Sigmoid colon (tissue), 7 donors: ENCODE measurements at regions of chr15 and their contacts with region 1.

Region 1: GRCh38 chr15:59688841-59689625 is at the start of gene BNIP2:
- DNase-seq: peak; percentile 100
- H3K4me3 ChIP-seq: peak within 1 kb of the TSS; percentile 94 to 98 (median 96)
- H3K27ac ChIP-seq: peak within 1 kb of the TSS; percentile 96 to 99 (median 98)
- H3K4me1 ChIP-seq: peaks cover 0 to 47% (median 31%) of the 10 kb centered on the region in 4 donors
- H3K27me3 ChIP-seq: no peaks in the 10 kb centered on the region
- CTCF ChIP-seq: no peak
- EP300 ChIP-seq: peak in 1 of 4 donors; percentile 43
- POLR2A ChIP-seq: peak; percentile 77 to 83
- total RNA-seq, gene BNIP2: 115 to 199 (median 142) TPM

Region 2: DNA sequence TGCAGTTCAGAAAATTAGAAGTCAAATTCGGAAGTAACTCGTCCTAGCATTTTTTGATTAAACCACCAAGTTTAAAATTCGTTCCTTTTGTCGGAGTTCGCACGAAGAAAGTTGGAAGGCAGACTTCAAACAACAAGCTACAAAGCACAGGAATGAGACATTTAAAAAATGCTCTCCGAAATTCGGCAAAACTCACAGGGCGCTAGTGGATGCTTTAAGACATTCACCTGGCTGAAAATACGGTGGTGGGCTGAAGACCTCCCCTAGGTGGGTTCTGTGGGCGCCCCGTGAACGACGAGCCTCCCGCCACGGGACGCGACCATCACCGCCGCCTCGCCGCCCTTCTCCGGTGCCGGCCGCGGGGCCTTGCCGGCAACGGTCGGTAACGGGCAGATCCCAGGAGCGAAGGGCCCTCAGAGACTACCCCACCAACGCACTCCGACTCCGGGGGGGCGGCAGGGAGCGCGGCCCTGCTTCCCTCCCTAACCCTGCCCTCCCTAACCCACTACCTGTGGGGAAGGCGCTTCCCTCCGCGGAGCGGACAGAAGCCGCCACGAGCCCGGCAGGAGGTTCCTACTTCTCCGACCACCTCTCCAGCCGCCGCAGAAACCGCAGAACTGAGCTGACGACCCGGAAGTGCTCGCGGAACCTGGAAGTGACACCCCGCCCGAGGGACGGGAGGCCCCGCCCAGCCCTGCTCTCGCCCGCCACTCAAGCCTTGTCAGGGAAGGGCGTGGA is 32.0 kb before region 1 on chr15 and contains the start of gene GTF2A2:
- intact Hi-C with region 1: loop called (anchors 1 kb)
- DNase-seq: peak; percentile 96
- H3K4me3 ChIP-seq: peak within 1 kb of the TSS; percentile 88 to 93 (median 91)
- H3K27ac ChIP-seq: peak within 1 kb of the TSS; percentile 85 to 88 (median 86)
- H3K4me1 ChIP-seq: peaks cover 0 to 31% (median 19%) of the 10 kb centered on the region in 4 donors
- H3K27me3 ChIP-seq: no peaks in the 10 kb centered on the region
- CTCF ChIP-seq: no peak
- EP300 ChIP-seq: no peak
- POLR2A ChIP-seq: peak; percentile 42 to 61
- total RNA-seq, gene GTF2A2: 33.7 to 48.2 (median 35.7) TPM

Region 3: DNA sequence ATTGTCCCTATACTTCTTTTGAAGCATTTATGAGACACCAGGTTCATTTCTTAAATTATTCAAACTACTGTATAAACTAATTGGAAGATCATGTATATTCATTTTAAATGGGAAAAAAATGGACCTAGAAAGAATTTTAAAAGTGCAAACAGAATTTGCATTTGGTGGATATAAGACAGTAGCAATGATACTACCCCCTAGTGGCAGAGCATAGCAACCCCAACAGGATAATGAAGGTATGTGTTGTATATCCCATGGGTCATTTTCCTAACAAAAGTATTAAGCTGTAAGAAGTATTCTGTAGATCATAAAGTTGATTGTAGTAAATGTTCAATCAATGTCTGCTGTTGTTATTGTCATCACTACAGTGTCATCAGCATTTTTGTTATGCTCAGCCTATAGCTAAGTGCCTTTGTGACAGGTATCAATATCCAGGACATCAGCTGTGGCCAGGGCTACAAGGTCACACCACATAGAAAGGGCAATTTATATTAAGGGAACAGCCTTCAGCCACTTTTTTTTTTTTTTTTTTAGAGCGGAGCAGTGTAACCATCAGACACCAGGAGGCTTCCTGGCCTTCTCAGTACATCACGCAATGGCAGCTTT is 490.9 kb after region 1 on chr15:
- intact Hi-C with region 1: loop called (anchors 5 kb)
- DNase-seq: no peak
- H3K4me3 ChIP-seq: no peak overlapping the region
- H3K27ac ChIP-seq: no peak overlapping the region
- H3K4me1 ChIP-seq: no peaks in the 10 kb centered on the region
- H3K27me3 ChIP-seq: no peaks in the 10 kb centered on the region
- CTCF ChIP-seq: peak in 2 of 4 experiments; percentile 48 to 74
- EP300 ChIP-seq: no peak
- POLR2A ChIP-seq: no peak

Region 4: GRCh38 chr15:60326824-60327654 is 638.0 kb after region 1 on chr15:
- intact Hi-C with region 1: loop called (anchors 10 kb)
- DNase-seq: no peak
- H3K4me3 ChIP-seq: no peak overlapping the region
- H3K27ac ChIP-seq: no peak overlapping the region
- H3K4me1 ChIP-seq: no peaks in the 10 kb centered on the region
- H3K27me3 ChIP-seq: peaks cover 10 to 60% (median 25%) of the 10 kb centered on the region in 3 donors
- CTCF ChIP-seq: peak; percentile 9 to 58 (median 42)
- EP300 ChIP-seq: no peak
- POLR2A ChIP-seq: no peak